Common myeloid progenitor, CD34-positive (primary cell): ENCODE measurements at regions of chr1 and their contacts with region 1.

Region 1: GRCh38 chr1:64663668-64664067 is 81.2 kb upstream of the RAVER2 start:
- DNase-seq: peak in 2 of 3 donors; percentile 31
- H3K4me3 ChIP-seq: no peak overlapping the region
- H3K27ac ChIP-seq: no peak overlapping the region
- H3K4me1 ChIP-seq: no peaks in the 10 kb centered on the region
- H3K27me3 ChIP-seq: no peaks in the 10 kb centered on the region

Region 2: GRCh38 chr1:64675718-64676345 is 12.2 kb after region 1 on chr1:
- CTCF ChIA-PET with region 1: interaction called, 56 read pairs
- POLR2A ChIA-PET with region 1: no interaction called
- DNase-seq: peak; percentile 22 to 36 (median 31)
- H3K4me3 ChIP-seq: no peak overlapping the region
- H3K27ac ChIP-seq: no peak overlapping the region
- H3K4me1 ChIP-seq: no peaks in the 10 kb centered on the region
- H3K27me3 ChIP-seq: no peaks in the 10 kb centered on the region

Region 3: DNA sequence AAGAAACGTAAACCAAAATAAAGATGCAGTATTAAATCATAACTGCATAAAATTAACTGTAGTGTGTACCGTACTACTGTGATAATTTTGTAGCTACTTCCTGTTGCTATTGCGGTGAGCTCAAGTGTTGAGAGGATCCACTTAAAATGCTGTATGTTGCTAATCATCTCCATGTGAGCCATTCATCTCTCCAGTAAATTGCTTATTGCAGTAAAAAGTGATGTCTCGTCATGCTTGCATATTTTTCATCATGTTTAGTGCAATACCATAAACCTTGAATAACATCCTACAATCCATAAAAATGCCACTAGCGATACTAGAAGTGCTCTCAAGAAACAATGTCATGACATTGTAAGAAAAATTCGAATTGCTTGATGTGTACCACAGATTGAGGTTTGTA is 147.5 kb after region 1 on chr1:
- CTCF ChIA-PET with region 1: no interaction called
- POLR2A ChIA-PET with region 1: no interaction called
- DNase-seq: no peak
- H3K4me3 ChIP-seq: no peak overlapping the region
- H3K27ac ChIP-seq: no peak overlapping the region
- H3K4me1 ChIP-seq: no peaks in the 10 kb centered on the region
- H3K27me3 ChIP-seq: no peaks in the 10 kb centered on the region